Activated naive CD4-positive, alpha-beta T cell treated with anti-CD3 and anti-CD28 coated beads for 36 hours (primary cell): ENCODE measurements at regions of chr11 and their contacts with region 1.

Region 1: GRCh38 chr11:20158597-20159257 is 1.5 kb downstream of the DBX1 start:
- DNase-seq: peak; percentile 45
- H3K4me3 Mint-ChIP-seq: no peak overlapping the region
- H3K27ac Mint-ChIP-seq: no peak overlapping the region
- H3K4me1 Mint-ChIP-seq: peaks cover 47% of the 10 kb centered on the region
- H3K27me3 Mint-ChIP-seq: peaks cover 69% of the 10 kb centered on the region

Region 2: DNA sequence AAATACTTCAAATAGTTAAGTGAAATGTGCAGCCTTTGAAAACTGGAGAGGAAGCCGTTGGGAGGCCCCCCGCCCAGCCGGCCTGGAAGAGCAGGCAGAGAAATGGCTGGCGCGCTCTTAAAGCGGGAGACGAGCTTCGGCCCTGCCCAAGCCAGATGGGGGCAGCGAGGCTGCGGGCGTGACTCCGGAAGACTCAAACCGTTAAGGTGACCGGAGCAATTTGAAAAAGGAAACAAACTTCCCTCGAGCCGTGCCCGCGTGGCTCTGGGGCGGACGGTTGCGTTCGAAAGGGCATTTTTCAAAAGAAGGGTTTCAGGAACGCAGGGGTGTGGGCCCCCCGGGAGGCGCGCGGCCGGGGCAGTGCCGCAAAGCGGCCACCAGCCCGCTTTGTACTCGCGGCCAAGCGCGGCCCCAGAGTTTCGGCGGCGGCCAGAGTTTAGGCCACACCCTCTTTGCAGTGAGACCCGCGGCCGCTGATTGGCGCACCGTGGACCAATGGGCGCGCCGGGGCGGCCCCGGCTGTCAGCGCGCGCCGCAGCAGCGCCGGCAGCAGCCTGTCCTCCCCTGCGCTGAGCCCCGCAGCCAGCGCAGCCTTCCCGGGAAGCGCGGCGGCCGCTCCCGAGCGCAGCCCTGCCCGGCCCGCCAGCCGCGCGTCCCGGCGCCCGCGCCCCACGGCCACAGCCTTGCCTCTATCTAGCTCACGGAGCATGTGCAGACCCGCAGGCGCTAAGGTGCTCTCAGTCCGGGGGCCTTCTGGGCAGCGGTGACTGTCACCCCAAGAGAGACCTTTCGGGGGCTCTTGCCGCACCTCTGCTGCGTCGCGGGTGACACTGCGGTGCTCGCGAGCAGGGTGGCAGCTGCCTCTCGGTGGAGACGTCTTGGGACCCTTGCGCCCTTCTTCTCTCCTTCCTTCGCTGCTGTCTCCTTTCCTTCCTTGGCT is 446.2 kb before region 1 on chr11 and contains the start of gene NAV2:
- CTCF ChIA-PET with region 1: no interaction called
- intact Hi-C with region 1: loop called (anchors 5 kb)
- DNase-seq: peak; percentile 72
- H3K4me3 Mint-ChIP-seq: peak within 1 kb of the TSS; percentile 81
- H3K27ac Mint-ChIP-seq: peak within 1 kb of the TSS; percentile 53
- H3K4me1 Mint-ChIP-seq: peaks cover 18% of the 10 kb centered on the region
- H3K27me3 Mint-ChIP-seq: peaks cover 44% of the 10 kb centered on the region
- total RNA-seq, gene NAV2: 0.20 to 0.41 TPM

Region 3: DNA sequence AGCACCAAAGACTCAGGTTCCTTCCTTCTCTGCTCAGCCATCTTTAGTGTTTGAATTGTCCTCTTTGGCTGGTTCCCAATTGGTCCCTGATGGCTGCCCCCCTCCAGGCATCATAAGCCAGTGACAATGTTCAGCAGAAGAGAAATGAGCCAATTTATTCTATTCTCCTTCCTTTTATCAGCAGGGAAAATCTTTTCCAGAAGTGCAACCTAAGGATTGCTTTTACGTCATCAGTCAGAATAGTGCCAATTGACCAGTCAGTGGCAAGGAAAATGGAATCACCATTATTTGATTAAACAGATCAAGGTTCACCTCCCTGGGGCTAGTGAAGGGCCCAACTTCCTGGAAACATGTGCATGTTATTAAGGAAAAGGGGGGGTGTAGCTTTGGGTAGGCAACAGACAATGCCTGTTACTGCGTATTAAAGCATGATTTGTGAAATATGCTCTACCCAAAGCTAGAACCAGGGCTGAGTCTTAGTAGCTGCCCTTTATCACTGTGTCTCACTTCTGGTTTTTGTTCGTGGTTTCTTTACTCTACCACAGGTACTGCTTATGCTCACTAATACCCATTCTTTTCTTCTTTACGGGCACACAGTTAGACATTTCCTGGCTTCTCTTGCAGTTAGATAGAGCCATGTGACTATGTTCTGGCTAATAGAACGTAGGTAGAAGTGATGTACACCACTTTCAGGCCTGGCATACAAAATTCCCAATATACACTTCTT is 14.2 kb after region 1 on chr11:
- CTCF ChIA-PET with region 1: no interaction called
- intact Hi-C with region 1: no loop called
- DNase-seq: no peak
- H3K4me3 Mint-ChIP-seq: no peak overlapping the region
- H3K27ac Mint-ChIP-seq: no peak overlapping the region
- H3K4me1 Mint-ChIP-seq: no peaks in the 10 kb centered on the region
- H3K27me3 Mint-ChIP-seq: peaks cover 49% of the 10 kb centered on the region

Region 4: GRCh38 chr11:20207781-20208621 is 49.3 kb after region 1 on chr11:
- CTCF ChIA-PET with region 1: interaction called, 4 read pairs
- intact Hi-C with region 1: loop called (anchors 2 kb)
- DNase-seq: no peak
- H3K4me3 Mint-ChIP-seq: no peak overlapping the region
- H3K27ac Mint-ChIP-seq: no peak overlapping the region
- H3K4me1 Mint-ChIP-seq: no peaks in the 10 kb centered on the region
- H3K27me3 Mint-ChIP-seq: peaks cover 57% of the 10 kb centered on the region

Region 5: DNA sequence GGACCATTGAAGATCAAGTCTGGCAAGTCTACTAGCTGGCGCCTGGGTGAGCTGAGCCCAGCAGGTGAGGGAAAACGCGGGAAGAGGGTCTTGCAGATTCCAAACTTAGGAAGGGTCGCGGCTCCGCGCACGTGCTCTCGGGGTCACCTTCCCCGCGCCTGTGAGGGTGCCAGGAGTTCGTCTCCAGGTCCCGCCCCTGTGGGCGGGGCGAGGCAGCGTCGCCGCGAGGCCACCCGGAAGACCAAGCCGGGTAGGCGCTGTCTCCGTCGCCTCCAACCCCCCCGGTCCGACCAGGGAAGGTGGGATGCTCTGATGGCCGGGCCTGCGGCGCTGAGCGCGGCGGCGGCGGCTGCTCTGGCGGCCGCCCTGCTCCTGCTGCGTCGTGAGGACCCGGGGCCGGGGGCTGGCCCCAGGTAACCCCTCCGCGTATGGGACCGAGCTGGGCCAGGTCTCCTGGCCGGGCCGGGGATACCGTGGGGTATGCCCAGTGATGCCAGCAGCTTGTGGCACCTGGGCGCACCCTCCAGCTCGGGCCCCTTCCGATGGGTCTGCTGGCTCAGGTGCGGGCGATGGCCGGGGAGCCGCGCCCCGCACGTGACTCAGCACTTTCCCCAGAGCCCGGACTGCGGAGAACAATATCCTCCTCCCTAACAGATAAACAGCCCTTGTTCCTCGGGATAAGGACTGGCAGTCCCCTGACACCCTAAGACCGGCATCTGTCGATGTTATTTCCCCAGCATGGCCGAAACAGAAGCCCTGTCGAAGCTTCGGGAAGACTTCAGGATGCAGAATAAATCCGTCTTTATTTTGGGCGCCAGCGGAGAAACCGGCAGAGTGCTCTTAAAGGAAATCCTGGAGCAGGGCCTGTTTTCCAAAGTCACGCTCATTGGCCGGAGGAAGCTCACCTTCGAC is 205.0 kb after region 1 on chr11 and contains the start of gene HTATIP2:
- CTCF ChIA-PET with region 1: no interaction called
- intact Hi-C with region 1: loop called (anchors 2 kb)
- DNase-seq: peak; percentile 75
- H3K4me3 Mint-ChIP-seq: peak within 1 kb of the TSS; percentile 82
- H3K27ac Mint-ChIP-seq: peak within 1 kb of the TSS; percentile 91
- H3K4me1 Mint-ChIP-seq: peaks cover 68% of the 10 kb centered on the region
- H3K27me3 Mint-ChIP-seq: no peaks in the 10 kb centered on the region
- total RNA-seq, gene HTATIP2: 78.3 to 80.7 TPM

Region 6: DNA sequence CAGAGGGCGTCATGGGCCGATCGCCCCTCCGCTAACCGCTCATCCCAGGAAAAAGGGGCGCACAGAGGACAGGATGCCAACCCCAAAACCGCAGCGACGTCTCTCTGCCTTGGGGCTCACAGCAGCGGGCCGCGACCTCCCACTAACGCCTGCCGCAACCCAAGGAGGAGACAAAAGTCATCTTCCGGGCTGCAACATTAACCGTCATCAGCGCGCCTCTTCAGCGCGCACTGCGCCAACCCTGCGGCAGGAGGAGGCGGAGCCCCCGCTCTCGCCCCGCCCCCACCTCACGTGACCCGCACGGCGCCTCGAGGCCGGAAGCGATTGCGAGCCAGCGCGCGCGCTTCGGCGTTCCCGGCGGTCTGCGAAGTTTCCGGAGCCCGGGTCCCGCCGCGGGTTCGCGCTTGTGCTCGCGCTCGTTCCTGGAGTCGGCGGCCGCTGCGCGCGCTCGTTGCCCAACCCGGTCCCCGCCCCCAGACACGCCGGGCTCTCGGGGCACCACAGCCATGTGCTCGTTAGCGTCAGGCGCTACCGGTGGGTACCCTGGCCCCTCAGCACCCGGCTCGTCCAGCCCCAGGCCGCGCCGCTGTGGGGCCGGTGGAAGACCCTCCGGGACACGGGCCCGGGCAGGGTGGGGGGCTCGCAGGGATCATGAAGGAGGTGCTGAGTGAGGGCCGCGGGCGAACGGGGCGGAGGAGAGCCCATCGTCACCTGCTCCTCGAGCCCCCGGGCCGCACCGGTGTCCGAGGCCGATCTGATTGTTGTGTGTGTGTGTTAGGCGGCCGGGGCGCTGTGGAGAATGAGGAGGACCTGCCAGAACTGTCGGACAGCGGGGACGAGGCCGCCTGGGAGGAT is 228.7 kb after region 1 on chr11 and contains the start of gene PRMT3:
- CTCF ChIA-PET with region 1: no interaction called
- intact Hi-C with region 1: loop called (anchors 1 kb)
- DNase-seq: peak; percentile 96
- H3K4me3 Mint-ChIP-seq: peak within 1 kb of the TSS; percentile 96
- H3K27ac Mint-ChIP-seq: peak within 1 kb of the TSS; percentile 99
- H3K4me1 Mint-ChIP-seq: peaks cover 32% of the 10 kb centered on the region
- H3K27me3 Mint-ChIP-seq: no peaks in the 10 kb centered on the region
- total RNA-seq, gene PRMT3: 31.0 to 33.2 TPM

Region 7: DNA sequence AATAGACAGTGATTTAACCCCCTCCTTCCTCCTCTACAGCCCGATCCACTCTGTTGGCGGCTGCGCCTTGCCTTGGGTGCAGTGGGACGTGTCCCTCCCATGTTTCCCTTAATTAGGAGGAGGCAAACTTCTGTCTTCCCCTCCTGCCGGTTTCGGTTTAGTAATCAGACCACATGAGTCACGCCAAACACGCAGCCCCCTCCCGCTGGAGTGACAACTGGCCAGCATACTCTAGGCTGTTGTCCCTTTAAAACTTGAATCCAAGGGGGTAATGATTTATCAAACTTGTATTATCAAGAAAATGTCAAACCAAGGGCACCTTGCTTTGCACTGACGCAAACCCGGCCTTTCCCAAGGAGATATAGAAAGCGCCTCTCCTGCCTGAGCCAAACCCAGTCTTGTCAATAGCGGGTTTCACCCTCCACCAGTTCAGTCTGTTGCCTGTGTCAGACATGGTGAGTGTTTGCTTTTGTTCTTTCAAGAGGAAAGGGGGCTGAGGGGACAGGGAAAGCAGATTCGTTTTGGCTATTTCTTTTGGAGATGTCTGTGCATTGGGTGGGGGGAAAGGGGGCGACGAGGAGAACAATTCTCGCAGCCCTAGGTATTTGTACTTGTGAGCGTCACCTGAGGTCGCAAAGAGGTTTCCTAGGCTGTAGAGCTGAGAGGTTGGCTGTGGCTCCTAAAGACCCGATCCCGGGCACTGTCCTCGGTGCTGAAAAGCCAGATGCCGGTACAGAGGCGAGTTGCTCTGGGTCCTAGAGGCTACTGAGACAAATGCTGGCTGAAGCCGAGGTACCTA is 440.7 kb after region 1 on chr11 and contains the start of gene SLC6A5:
- CTCF ChIA-PET with region 1: no interaction called
- intact Hi-C with region 1: loop called (anchors 2 kb)
- DNase-seq: peak; percentile 66
- H3K4me3 Mint-ChIP-seq: no peak within 1 kb of the TSS
- H3K27ac Mint-ChIP-seq: no peak within 1 kb of the TSS
- H3K4me1 Mint-ChIP-seq: peaks cover 8% of the 10 kb centered on the region
- H3K27me3 Mint-ChIP-seq: peaks cover 93% of the 10 kb centered on the region
- total RNA-seq, gene SLC6A5: not detected

Region 8: DNA sequence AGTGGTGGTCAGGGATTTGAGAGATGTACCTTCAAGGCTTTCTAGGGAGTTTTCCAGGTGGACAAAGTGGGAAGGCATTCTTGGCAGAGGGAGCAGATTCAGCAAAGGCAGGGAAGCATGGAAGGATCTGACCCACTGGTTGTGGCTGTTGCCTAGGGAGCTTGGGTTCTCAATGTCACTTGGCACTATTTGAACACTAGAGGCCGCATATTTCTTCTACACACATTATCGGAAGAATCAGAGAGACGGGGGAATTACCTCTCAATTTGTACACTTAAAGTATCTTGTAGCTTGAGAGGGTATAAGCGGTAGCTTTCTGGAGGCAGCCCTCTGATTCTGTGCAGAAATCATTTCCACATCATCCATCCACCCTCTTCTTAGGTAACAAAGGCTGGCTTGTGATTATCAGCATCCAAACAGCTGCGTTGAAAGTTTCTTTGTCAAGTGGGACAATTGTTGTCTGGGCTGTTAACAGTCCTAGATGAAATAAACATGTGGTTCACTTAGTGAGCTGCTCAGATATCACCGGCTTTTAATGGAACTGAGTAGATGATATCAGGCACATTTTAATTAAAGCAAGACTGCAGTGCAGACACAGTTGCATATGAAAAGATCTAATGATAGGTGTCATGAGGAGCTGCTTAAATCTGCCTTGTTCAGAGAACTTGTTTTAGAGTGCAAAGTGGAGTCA is 513.3 kb after region 1 on chr11:
- CTCF ChIA-PET with region 1: no interaction called
- intact Hi-C with region 1: loop called (anchors 10 kb)
- DNase-seq: no peak
- H3K4me3 Mint-ChIP-seq: no peak overlapping the region
- H3K27ac Mint-ChIP-seq: no peak overlapping the region
- H3K4me1 Mint-ChIP-seq: peaks cover 12% of the 10 kb centered on the region
- H3K27me3 Mint-ChIP-seq: peaks cover 66% of the 10 kb centered on the region